PC-9 (cell line): ENCODE measurements at regions of chr3 and their contacts with region 1.

Region 1: DNA sequence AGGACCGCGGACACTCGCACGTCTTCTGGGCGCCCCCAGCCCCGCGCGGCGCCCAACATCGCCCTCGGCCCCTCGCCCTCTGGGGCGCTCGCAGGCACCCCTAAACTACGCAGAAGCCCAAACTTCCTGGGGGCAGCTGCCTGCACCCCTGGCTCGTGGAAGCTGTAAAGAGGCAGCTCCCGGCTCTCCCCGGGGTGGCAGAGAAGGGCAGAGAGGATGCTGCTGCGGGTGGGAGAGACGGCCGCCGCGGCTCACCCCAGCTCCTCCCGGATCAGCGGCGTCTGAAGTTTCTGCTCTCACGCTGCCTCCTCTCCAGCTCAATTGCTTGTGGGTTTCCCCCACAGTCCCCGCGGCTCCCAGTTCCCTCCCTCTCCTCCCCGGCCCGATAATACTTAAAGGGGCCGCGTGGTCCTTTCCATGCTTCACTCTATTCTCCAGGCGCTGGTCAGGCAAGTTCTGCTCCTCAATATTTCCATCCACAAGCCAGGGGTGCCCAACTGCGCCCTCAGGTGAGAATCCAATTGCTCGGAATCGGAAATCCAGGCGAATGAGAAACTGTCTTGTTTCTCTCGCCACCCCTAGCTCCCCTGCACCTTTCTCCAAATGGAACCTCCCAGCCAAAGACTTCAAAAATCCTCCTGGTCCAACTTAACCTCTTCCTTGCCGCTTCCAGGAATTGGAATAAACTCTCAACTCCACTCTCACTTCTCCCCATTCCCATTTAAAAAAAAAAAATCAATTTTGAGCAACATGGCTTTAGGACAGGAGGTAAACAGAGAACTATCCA is 748.5 kb downstream of the ROBO1 start:
- DNase-seq: peak; percentile 82 to 86
- H3K4me3 ChIP-seq: peak overlapping the region; percentile 83
- H3K27ac ChIP-seq: peak overlapping the region; percentile 79
- H3K4me1 ChIP-seq: peaks cover 20% of the 10 kb centered on the region; the same call in 1 of the 2 replicates
- H3K27me3 ChIP-seq: no peaks in the 10 kb centered on the region
- CTCF ChIP-seq: no peak

Region 2: GRCh38 chr3:78823852-78824251 is 195.5 kb before region 1 on chr3:
- CTCF ChIA-PET with region 1: no interaction called
- POLR2A ChIA-PET with region 1: no interaction called
- intact Hi-C with region 1: loop called (anchors 10 kb)
- DNase-seq: peak; percentile 5 to 95
- H3K4me3 ChIP-seq: no peak overlapping the region
- H3K27ac ChIP-seq: peak overlapping the region; percentile 67
- H3K4me1 ChIP-seq: peaks cover 20% of the 10 kb centered on the region
- H3K27me3 ChIP-seq: no peaks in the 10 kb centered on the region
- CTCF ChIP-seq: no peak